Activated T-helper 2 cell treated with anti-CD3 and anti-CD28 coated beads, Interferon-gamma antibody, Interleukin-2, Interleukin-4, amounts not matched to agents 10 μg/mL and 5 μg/mL and 100 μg/mL, durations not matched to agents 14 hours and 24 hours and 36 hours (primary cell): ENCODE measurements at regions of chr13 and their contacts with region 1.

Region 1: DNA sequence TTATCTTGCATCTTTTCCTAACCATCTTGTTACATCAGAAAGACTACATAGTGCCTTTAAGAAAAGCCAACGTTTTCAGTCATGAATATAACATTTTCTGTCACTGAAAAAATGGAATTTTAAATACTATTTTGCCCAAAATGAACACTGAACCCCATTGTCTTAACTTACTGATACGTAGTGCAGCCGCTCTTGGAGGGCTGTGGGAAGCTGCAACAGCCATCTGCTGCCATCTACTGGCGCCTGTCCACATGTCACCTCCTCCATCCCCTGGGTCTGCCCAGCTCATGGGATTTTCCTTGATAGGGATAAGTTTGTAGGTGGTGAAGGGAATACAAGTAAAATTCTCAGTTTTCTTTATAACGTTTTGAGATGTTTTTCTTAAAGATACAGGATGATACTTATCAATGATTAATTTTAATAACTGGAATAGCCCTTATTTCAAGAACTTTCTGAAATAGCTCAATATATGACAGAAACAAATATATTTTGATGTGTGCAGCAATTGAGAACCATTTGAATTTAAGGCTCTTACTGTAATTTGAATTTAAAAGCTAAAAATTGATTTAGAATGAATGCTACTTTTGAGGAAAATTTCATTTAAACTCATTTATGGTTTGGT is 73.7 kb downstream of the GGACT start:
- DNase-seq: peak; percentile 51
- H3K4me3 Mint-ChIP-seq: no peak overlapping the region
- H3K27ac Mint-ChIP-seq: no peak overlapping the region
- H3K4me1 Mint-ChIP-seq: peaks cover 19% of the 10 kb centered on the region
- H3K27me3 Mint-ChIP-seq: peaks cover 35% of the 10 kb centered on the region

Region 2: GRCh38 chr13:99916366-99917103 is 598.4 kb before region 1 on chr13:
- intact Hi-C with region 1: loop called (anchors 2 kb)
- DNase-seq: no peak
- H3K4me3 Mint-ChIP-seq: no peak overlapping the region
- H3K27ac Mint-ChIP-seq: no peak overlapping the region
- H3K4me1 Mint-ChIP-seq: peaks cover 6% of the 10 kb centered on the region
- H3K27me3 Mint-ChIP-seq: peaks cover 39% of the 10 kb centered on the region

Region 3: GRCh38 chr13:100566543-100566942 is 51.6 kb after region 1 on chr13:
- intact Hi-C with region 1: no loop called
- DNase-seq: no peak
- H3K4me3 Mint-ChIP-seq: no peak overlapping the region
- H3K27ac Mint-ChIP-seq: no peak overlapping the region
- H3K4me1 Mint-ChIP-seq: no peaks in the 10 kb centered on the region
- H3K27me3 Mint-ChIP-seq: no peaks in the 10 kb centered on the region